ENCODE measurements at regions of chr7 and their contacts with region 1.

Region 1: DNA sequence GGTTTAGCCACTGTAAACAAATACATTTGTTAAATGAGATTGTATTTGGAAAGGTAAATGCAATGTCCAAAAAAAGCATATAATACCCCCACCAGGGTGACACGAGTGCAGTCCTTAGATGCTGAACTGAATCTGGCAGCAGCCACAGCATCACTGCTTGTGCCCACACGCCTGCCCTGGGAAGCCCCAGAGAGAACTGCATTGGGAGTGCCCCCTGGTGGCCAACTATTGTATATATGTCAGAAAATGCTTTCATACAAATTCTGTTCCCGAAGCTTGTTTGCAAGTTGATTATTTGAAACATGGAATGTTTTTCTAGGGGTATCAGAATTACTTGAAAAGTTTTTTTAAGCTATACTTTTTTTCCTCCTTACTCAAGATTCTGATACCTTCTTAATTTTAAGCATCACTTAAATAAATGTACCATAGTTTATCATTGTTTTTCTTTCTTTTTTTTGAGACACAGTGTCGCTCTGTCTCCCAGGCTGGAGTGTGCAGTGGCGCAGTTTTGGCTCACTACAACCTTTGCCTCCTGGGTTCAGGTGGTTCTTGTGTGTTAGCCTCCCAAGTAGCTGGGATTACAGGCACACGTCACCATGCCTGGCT is 50.1 kb downstream of the LANCL2 start:
- DNase-seq: peak; percentile 80
- ATAC-seq: peak; percentile 80

Region 2: DNA sequence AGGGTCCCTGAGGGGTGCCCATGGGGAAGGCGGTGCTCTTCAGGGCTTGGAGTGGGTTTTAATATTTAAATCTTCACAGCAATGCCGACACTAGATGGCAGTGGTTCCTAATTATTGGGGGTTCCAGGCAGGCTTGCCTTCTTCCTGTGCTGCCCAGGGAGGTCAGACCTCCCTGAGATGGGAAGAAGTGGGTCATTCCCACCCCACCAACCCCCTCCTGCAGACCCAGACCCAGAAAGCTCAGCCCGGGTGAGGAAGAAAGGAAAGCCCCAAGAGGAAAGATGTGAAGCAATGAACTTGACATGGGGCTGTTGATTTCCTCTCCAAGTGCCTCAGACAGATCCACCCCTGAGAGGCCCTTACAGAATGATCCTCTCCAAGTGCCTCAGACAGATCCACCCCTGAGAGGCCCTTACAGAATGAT is 135.2 kb before region 1 on chr7:
- intact Hi-C with region 1: loop called (anchors 5 kb)
- DNase-seq: peak; percentile 41
- ATAC-seq: peak; percentile 89

Region 3: DNA sequence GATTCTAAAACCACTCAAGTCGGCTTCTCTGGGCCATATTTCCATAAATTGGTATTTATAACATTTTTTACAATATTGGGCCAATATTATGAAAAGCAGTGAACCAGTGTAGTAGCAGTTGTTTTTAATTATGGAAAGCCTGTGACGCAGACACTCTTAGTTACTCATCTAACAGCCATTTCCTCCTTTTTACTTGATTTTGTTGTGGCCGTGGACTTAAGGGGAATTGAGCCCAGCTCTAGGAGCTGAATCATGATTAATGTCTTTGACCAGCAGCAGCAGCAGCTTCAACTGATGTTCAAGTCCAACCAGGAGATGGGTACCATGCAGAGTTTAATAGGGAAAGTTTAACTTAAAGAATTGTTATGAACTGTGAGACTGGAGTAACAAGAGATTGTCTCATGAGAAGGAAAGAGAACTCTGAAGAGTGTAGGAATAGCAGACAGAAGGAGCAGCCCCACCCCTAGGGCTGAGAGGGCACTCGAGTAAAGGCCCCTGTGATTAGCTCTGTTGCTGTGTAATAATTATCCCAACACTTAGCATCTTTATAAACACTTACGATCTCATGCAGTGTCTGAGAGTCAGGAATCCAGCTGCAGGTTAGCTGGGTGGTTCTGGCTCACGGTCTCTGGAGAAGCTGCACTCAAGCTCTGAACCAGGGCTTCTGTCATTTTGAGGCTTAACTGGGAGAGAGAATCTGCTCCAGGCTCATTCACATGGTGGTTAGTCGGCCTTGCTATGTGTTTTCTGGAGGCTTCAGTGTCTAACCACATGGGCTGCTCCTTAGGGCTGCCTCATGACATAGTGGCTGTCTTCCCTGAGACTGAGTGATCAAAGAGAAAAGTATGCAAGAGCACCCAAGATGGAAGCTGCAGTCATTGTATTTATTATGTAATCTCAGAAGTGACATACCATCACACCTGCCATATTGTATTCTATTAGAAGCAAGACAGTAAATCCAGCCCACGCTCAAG is 45.6 kb before region 1 on chr7:
- intact Hi-C with region 1: loop called (anchors 5 kb)
- DNase-seq: no peak
- ATAC-seq: no peak

Region 4: DNA sequence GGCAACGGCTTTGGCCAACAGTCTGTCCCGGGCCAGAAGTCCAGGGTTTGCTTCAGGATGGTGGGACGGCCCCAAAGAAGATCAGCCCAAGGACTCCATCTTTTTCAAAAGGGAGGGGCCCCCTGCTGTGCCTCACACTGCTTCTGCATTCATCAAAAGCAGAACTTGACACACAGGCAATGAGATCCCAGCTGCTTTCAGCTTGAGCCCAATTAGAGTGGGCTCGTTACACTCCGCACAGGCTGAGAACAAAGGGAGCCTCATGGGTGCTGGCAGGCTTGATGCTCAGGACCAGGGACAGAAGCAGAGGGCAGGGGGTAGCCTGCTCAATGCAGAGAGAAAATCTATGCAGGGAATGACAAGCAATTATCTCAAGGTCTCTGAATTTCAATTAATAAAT is 111.5 kb after region 1 on chr7:
- intact Hi-C with region 1: no loop called
- DNase-seq: no peak
- ATAC-seq: peak; percentile 71